ENCODE measurements at regions of chr2 and their contacts with region 1.

Region 1: DNA sequence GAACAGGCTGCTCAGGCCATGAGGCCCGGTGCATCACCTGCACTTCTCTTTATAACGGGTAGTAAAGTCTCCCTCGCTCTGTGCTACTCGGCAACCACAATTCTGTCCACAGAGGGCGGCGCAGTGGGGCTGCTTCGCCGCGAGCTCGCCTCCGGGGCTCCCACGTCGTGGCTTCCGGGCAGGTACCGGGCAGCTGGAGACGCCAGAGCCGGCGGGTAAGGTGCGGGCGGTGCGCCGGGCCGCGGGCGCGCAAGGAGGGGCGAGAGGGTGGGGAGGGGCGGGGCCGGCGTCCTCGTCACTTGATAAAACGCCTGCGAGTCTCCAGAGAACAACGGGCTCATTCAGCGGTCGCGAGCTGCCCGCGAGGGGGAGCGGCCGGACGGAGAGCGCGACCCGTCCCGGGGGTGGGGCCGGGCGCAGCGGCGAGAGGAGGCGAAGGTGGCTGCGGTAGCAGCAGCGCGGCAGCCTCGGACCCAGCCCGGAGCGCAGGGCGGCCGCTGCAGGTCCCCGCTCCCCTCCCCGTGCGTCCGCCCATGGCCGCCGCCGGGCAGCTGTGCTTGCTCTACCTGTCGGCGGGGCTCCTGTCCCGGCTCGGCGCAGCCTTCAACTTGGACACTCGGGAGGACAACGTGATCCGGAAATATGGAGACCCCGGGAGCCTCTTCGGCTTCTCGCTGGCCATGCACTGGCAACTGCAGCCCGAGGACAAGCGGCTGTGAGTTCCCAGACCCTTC is at the start of gene ITGA6:
- DNase-seq: peak; percentile 54 to 86 (median 76)
- ATAC-seq: peak; percentile 70 to 74
- H3K4me3 Mint-ChIP-seq: peak within 1 kb of the TSS in 9 of 10 donors; percentile 90 to 99 (median 97)
- H3K27ac Mint-ChIP-seq: peak within 1 kb of the TSS; percentile 73 to 96 (median 93)
- H3K4me1 Mint-ChIP-seq: peaks cover 25 to 34% (median 28%) of the 10 kb centered on the region in 4 donors
- H3K27me3 Mint-ChIP-seq: no peaks in the 10 kb centered on the region
- polyA plus RNA-seq, gene ITGA6: 58.4 to 80.0 (median 64.2) TPM

Region 2: GRCh38 chr2:172442072-172442895 is 14.9 kb after region 1 on chr2:
- POLR2A ChIA-PET with region 1: interaction called, 112 read pairs
- DNase-seq: peak in 8 of 10 donors; percentile 24 to 67 (median 58)
- ATAC-seq: peak; percentile 49 to 64
- H3K4me3 Mint-ChIP-seq: peak overlapping the region; percentile 77 to 95 (median 88)
- H3K27ac Mint-ChIP-seq: peak overlapping the region; percentile 30 to 98 (median 88)
- H3K4me1 Mint-ChIP-seq: peaks cover 17 to 57% (median 45%) of the 10 kb centered on the region in 4 donors
- H3K27me3 Mint-ChIP-seq: no peaks in the 10 kb centered on the region

Region 3: DNA sequence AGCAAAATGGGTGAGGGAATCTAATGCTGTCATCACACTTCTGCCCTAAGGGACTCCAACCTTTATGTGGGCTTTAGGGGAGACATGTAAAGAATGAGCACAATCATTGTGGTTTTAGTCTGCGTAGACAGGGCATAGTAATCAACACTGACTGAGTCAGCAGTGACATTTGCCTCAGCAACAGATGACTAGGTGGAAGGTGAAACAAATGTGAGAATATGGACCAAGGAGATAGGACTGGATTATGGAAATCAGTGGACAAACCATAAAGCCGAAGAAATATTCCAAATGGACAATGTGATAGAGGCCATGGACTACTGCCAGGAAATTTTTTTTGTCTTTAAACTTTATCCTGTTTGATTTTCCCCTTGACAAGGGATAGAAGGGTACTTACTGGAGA is 212.4 kb after region 1 on chr2:
- POLR2A ChIA-PET with region 1: no interaction called
- DNase-seq: no peak
- ATAC-seq: peak in 1 of 2 donors; percentile 44
- H3K4me3 Mint-ChIP-seq: no peak overlapping the region
- H3K27ac Mint-ChIP-seq: no peak overlapping the region
- H3K4me1 Mint-ChIP-seq: peaks cover 0 to 10% (median 3%) of the 10 kb centered on the region in 4 donors
- H3K27me3 Mint-ChIP-seq: peaks cover 0 to 2% (median 0%) of the 10 kb centered on the region in 5 donors

Measured in naive thymus-derived CD8-positive, alpha-beta T cell (primary cell).